ENCODE measurements at regions of chr3 and their contacts with region 1.

Region 1: DNA sequence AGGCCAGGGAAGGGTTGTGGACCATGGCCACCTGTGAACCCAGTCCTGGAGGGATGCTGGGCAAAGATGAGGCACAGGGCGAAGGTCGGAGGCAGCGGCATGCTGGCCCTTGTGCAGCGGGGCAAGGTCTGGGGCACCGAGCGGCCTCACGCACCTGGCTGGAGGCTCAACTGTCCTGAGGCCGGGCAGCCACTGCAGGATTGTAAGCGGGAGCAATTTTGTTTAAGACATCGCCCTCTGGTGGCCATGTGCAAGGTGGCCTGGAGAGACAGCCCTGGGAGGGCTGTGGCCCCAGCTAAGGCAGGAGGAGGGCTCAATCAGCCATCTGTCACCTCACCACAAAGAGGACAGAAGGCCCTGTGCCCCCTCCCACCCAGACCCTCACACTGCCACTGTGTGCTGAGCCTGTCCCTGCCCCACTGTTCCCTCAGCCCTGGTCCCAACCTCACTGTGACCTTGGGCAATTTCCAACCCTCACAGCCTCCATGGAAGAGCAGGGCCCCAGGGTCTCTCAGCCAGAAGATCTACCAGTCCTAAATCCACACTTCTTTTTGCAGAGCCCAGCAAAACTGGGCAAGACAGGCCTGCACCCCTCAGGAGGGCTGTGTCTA is 46.2 kb downstream of the TPRA1 start:
- DNase-seq: peak; percentile 49 to 56 (median 50)
- H3K4me3 ChIP-seq: no peak overlapping the region
- H3K4me3 Mint-ChIP-seq: no peak overlapping the region
- H3K27ac ChIP-seq: no peak overlapping the region
- H3K27ac Mint-ChIP-seq: peak overlapping the region in 1 of 7 donors; percentile 10
- H3K4me1 ChIP-seq: peaks cover 14% of the 10 kb centered on the region
- H3K4me1 Mint-ChIP-seq: peaks cover 3 to 25% (median 11%) of the 10 kb centered on the region in 4 donors
- H3K27me3 ChIP-seq: no peaks in the 10 kb centered on the region
- H3K27me3 Mint-ChIP-seq: peaks cover 1 to 3% of the 10 kb centered on the region in 2 donors

Region 2: GRCh38 chr3:126522363-126522788 is 1021.9 kb before region 1 on chr3:
- CTCF ChIA-PET with region 1: interaction called, 23 read pairs
- POLR2A ChIA-PET with region 1: no interaction called
- intact Hi-C with region 1: loop called (anchors 1 kb)
- DNase-seq: peak in 4 of 5 donors; percentile 24 to 43 (median 30)
- H3K4me3 ChIP-seq: no peak overlapping the region
- H3K4me3 Mint-ChIP-seq: no peak overlapping the region
- H3K27ac ChIP-seq: no peak overlapping the region
- H3K27ac Mint-ChIP-seq: no peak overlapping the region
- H3K4me1 ChIP-seq: no peaks in the 10 kb centered on the region
- H3K4me1 Mint-ChIP-seq: no peaks in the 10 kb centered on the region
- H3K27me3 ChIP-seq: no peaks in the 10 kb centered on the region
- H3K27me3 Mint-ChIP-seq: peaks cover 13 to 14% of the 10 kb centered on the region in 2 donors

Region 3: DNA sequence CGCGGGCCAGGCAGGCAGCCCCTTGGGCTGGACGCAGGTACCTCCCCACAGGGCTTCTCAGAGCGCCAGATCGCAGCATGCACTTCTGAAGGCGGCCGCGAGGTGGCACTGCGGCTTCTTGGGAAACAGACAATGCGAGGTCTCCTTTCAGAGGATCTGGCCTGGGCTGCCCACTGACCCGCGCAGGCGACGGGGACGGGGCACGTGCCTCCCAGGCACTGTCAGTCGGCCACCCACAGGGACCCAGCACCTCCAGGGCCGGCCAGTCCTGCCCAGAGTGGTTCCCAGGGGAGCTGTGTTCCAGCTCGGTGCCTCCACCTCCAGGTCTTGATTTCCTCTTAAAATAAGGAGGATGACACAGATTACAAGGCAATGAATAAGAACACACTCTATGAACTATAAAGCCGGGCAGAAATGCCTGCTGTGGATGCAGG is 865.0 kb before region 1 on chr3:
- CTCF ChIA-PET with region 1: interaction called, 90 read pairs
- POLR2A ChIA-PET with region 1: interaction called, 4 read pairs
- intact Hi-C with region 1: loop called (anchors 1 kb)
- DNase-seq: peak; percentile 58 to 73 (median 65)
- H3K4me3 ChIP-seq: no peak overlapping the region
- H3K4me3 Mint-ChIP-seq: peak overlapping the region in 5 of 8 donors; percentile 5 to 71 (median 55)
- H3K27ac ChIP-seq: no peak overlapping the region
- H3K27ac Mint-ChIP-seq: no peak overlapping the region
- H3K4me1 ChIP-seq: peaks cover 3% of the 10 kb centered on the region
- H3K4me1 Mint-ChIP-seq: peaks cover 0 to 8% (median 3%) of the 10 kb centered on the region in 4 donors
- H3K27me3 ChIP-seq: no peaks in the 10 kb centered on the region
- H3K27me3 Mint-ChIP-seq: peaks cover 8 to 28% of the 10 kb centered on the region in 2 donors

Region 4: GRCh38 chr3:126752303-126752842 is 791.9 kb before region 1 on chr3:
- CTCF ChIA-PET with region 1: interaction called, 12 read pairs
- POLR2A ChIA-PET with region 1: no interaction called
- intact Hi-C with region 1: no loop called
- DNase-seq: peak in 4 of 5 donors; percentile 15 to 25 (median 23)
- H3K4me3 ChIP-seq: no peak overlapping the region
- H3K4me3 Mint-ChIP-seq: no peak overlapping the region
- H3K27ac ChIP-seq: no peak overlapping the region
- H3K27ac Mint-ChIP-seq: peak overlapping the region in 1 of 7 donors; percentile 22
- H3K4me1 ChIP-seq: no peaks in the 10 kb centered on the region
- H3K4me1 Mint-ChIP-seq: peaks cover 5 to 11% (median 7%) of the 10 kb centered on the region in 4 donors
- H3K27me3 ChIP-seq: no peaks in the 10 kb centered on the region
- H3K27me3 Mint-ChIP-seq: no peaks in the 10 kb centered on the region

Region 5: GRCh38 chr3:127389420-127389819 is 154.9 kb before region 1 on chr3:
- CTCF ChIA-PET with region 1: no interaction called
- POLR2A ChIA-PET with region 1: no interaction called
- intact Hi-C with region 1: no loop called
- DNase-seq: no peak
- H3K4me3 ChIP-seq: no peak overlapping the region
- H3K4me3 Mint-ChIP-seq: no peak overlapping the region
- H3K27ac ChIP-seq: no peak overlapping the region
- H3K27ac Mint-ChIP-seq: no peak overlapping the region
- H3K4me1 ChIP-seq: no peaks in the 10 kb centered on the region
- H3K4me1 Mint-ChIP-seq: no peaks in the 10 kb centered on the region
- H3K27me3 ChIP-seq: no peaks in the 10 kb centered on the region
- H3K27me3 Mint-ChIP-seq: peaks cover 2 to 6% of the 10 kb centered on the region in 2 donors

Measured in CD4-positive, alpha-beta memory T cell (primary cell).